Ovary (tissue), 10 donors: ENCODE measurements at regions of chr12 and their contacts with region 1.

Region 1: GRCh38 chr12:50618864-50619609 is 114.3 kb downstream of the DIP2B start:
- DNase-seq: no peak
- H3K4me3 ChIP-seq: no peak overlapping the region
- H3K27ac ChIP-seq: no peak overlapping the region
- H3K4me1 ChIP-seq: peaks cover 12% of the 10 kb centered on the region
- H3K27me3 ChIP-seq: no peaks in the 10 kb centered on the region
- CTCF ChIP-seq: no peak
- EP300 ChIP-seq: no peak
- POLR2A ChIP-seq: no peak

Region 2: GRCh38 chr12:49920241-49920921 is 698.7 kb before region 1 on chr12:
- intact Hi-C with region 1: no loop called
- DNase-seq: peak in 2 of 5 donors; percentile 34 to 55
- H3K4me3 ChIP-seq: no peak overlapping the region
- H3K27ac ChIP-seq: no peak overlapping the region
- H3K4me1 ChIP-seq: peaks cover 17% of the 10 kb centered on the region
- H3K27me3 ChIP-seq: no peaks in the 10 kb centered on the region
- CTCF ChIP-seq: no peak
- EP300 ChIP-seq: peak; percentile 16
- POLR2A ChIP-seq: no peak

Region 3: GRCh38 chr12:50467439-50467838 is 151.6 kb before region 1 on chr12:
- intact Hi-C with region 1: no loop called
- DNase-seq: no peak
- H3K4me3 ChIP-seq: no peak overlapping the region
- H3K27ac ChIP-seq: no peak overlapping the region
- H3K4me1 ChIP-seq: no peaks in the 10 kb centered on the region
- H3K27me3 ChIP-seq: no peaks in the 10 kb centered on the region
- CTCF ChIP-seq: no peak
- EP300 ChIP-seq: no peak
- POLR2A ChIP-seq: no peak

Region 4: GRCh38 chr12:50517456-50518048 is 101.5 kb before region 1 on chr12:
- intact Hi-C with region 1: loop called in 1 of 4 experiments (anchors 5 kb)
- DNase-seq: no peak
- H3K4me3 ChIP-seq: no peak overlapping the region
- H3K27ac ChIP-seq: no peak overlapping the region
- H3K4me1 ChIP-seq: peaks cover 12% of the 10 kb centered on the region
- H3K27me3 ChIP-seq: no peaks in the 10 kb centered on the region
- CTCF ChIP-seq: no peak
- EP300 ChIP-seq: no peak
- POLR2A ChIP-seq: no peak